ENCODE measurements at regions of chr7 and their contacts with region 1.

Region 1: GRCh38 chr7:95229301-95229700 is 95.0 kb downstream of the PON1 start:
- DNase-seq: no peak
- H3K4me3 ChIP-seq: no peak overlapping the region
- H3K4me3 Mint-ChIP-seq: no peak overlapping the region
- H3K27ac Mint-ChIP-seq: no peak overlapping the region
- H3K4me1 ChIP-seq: no peaks in the 10 kb centered on the region
- H3K4me1 Mint-ChIP-seq: no peaks in the 10 kb centered on the region
- H3K27me3 ChIP-seq: no peaks in the 10 kb centered on the region
- H3K27me3 Mint-ChIP-seq: no peaks in the 10 kb centered on the region
- CTCF ChIP-seq: no peak

Region 2: DNA sequence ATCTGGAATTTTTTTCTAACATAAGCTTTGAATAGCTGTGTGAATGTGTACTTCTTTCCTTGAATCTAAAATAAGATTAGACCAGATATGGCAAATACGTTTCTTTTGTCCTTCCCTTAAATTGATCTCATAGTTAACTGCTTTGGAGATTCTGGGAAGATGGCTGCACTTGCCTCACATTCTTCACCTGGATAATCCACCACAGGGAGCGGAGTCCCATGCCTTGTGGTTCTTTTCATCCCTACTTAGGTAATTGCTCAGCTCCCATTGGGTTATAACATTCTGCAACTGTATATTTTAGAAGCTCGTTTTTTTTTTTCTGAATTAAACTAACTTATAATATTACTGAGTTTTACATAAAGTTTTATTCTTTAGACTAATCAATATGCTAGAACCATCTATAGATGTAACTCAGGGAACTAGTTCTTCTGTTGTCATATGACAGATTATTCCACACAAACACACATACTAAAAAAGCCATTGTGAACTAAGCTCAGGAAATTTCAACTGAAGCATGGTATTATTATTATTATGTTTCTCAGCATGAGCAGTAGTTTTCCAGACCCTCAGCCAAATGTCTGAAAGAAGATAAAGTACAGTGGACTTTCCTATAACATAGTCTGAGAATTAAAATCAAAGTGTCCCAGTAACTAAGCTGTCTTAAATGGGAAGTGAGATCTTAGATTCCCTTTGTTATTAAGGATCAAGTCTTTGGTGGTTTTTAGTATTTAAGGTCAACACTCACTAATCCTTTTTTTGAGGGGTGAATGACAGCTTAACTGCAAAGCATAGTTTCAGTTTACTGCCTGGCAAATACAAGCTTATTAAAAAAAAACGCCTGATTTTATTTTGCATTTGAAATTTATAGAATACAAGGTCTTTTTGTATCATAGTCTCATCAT is 139.6 kb before region 1 on chr7:
- CTCF ChIA-PET with region 1: no interaction called
- POLR2A ChIA-PET with region 1: interaction called, 13 read pairs
- intact Hi-C with region 1: no loop called
- DNase-seq: no peak
- H3K4me3 ChIP-seq: no peak overlapping the region
- H3K4me3 Mint-ChIP-seq: no peak overlapping the region
- H3K27ac Mint-ChIP-seq: no peak overlapping the region
- H3K4me1 ChIP-seq: peaks cover 10% of the 10 kb centered on the region; the same call in 1 of the 2 replicates
- H3K4me1 Mint-ChIP-seq: peaks cover 7% of the 10 kb centered on the region
- H3K27me3 ChIP-seq: no peaks in the 10 kb centered on the region
- H3K27me3 Mint-ChIP-seq: no peaks in the 10 kb centered on the region
- CTCF ChIP-seq: no peak

Region 3: GRCh38 chr7:95126053-95126709 is 103.1 kb before region 1 on chr7:
- CTCF ChIA-PET with region 1: no interaction called
- POLR2A ChIA-PET with region 1: no interaction called
- intact Hi-C with region 1: no loop called
- DNase-seq: no peak
- H3K4me3 ChIP-seq: no peak overlapping the region
- H3K4me3 Mint-ChIP-seq: no peak overlapping the region
- H3K27ac Mint-ChIP-seq: no peak overlapping the region
- H3K4me1 ChIP-seq: no peaks in the 10 kb centered on the region
- H3K4me1 Mint-ChIP-seq: peaks cover 7% of the 10 kb centered on the region
- H3K27me3 ChIP-seq: no peaks in the 10 kb centered on the region
- H3K27me3 Mint-ChIP-seq: no peaks in the 10 kb centered on the region
- CTCF ChIP-seq: no peak

Region 4: GRCh38 chr7:95213809-95214492 is 15.3 kb before region 1 on chr7:
- CTCF ChIA-PET with region 1: no interaction called
- POLR2A ChIA-PET with region 1: no interaction called
- intact Hi-C with region 1: no loop called
- DNase-seq: no peak
- H3K4me3 ChIP-seq: no peak overlapping the region
- H3K4me3 Mint-ChIP-seq: no peak overlapping the region
- H3K27ac Mint-ChIP-seq: no peak overlapping the region
- H3K4me1 ChIP-seq: no peaks in the 10 kb centered on the region
- H3K4me1 Mint-ChIP-seq: no peaks in the 10 kb centered on the region
- H3K27me3 ChIP-seq: no peaks in the 10 kb centered on the region
- H3K27me3 Mint-ChIP-seq: no peaks in the 10 kb centered on the region
- CTCF ChIP-seq: no peak